ENCODE measurements at regions of chr15 and their contacts with region 1.

Region 1: DNA sequence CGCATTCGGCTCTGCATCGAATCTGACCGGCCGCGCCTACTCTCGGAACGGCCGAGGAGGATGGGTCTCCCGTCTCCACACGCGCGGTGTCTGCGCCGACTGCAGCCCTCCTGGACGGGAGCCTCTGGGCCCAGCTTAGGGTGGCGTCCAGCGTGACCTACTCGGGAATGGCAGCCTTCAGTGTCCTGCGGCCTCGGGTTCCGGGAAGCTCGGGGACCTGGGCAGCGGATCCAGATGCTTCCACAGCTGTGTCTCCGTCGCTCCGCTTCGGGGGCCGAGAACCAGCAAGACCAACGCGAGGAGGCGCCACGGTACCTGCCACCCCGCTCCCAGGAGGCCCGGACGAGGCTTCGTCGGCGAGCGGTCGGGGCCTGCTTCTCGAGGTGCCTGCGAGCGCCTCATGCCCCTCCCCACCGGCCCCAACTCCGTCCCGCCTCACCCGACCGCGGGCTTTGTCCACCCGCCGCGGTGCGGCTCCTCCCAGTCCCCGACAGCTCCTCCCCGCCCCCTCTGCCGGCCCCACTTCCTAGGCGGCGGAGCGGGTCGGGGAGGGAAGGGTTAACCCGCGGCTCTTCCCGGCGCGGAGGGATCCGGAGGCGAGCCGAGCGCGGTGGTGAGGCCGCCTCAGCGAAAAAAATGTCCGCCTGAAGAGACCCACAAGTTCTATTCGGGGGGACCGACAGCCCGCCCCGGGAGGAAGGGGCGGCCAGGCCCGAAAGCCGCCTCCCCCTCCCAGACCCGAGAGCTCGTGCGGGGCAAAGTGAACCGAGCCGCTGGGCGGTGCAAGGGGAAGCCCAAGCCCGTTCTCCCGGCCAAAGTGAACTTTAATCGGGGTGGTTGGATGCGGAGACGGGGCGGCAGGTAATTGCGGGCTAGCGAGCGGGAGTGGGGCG is at the start of gene TCF12:
- DNase-seq: peak; percentile 94
- H3K4me3 ChIP-seq: peak within 1 kb of the TSS; percentile 87 to 98 (median 87)
- H3K27ac ChIP-seq: peak within 1 kb of the TSS; percentile 86
- H3K4me1 ChIP-seq: peaks cover 42% of the 10 kb centered on the region
- H3K27me3 ChIP-seq: no peaks in the 10 kb centered on the region
- CTCF ChIP-seq: peak; percentile 11 to 51
- POLR2A ChIP-seq: peak; percentile 45
- total RNA-seq, gene TCF12: 127 and 133 TPM in 2 replicates

Region 2: DNA sequence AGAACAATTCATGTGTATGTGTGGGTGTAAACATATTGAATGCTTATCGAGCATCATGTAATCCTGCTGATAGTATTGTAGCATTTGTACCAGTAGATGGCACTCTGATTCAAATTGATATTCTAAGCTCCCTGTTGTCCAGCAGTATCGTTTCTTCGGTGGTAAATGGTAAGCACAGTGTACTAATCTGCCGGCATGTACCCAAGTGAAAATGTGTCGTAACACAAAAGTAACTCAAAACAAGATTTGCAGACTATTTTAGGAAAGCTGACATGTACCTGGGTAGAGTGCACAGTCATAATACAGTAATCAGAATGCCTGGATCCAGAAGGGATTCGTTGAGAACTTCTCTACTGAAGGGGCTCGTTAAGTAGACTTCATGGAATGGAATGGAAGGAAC is 421.7 kb before region 1 on chr15:
- CTCF ChIA-PET with region 1: interaction called, 6 read pairs
- POLR2A ChIA-PET with region 1: no interaction called
- dilution Hi-C with region 1: no loop called
- intact Hi-C with region 1: loop called (anchors 5 kb)
- DNase-seq: peak; percentile 78
- H3K4me3 ChIP-seq: no peak overlapping the region
- H3K27ac ChIP-seq: no peak overlapping the region
- H3K4me1 ChIP-seq: no peaks in the 10 kb centered on the region
- H3K27me3 ChIP-seq: peaks cover 7 to 19% of the 10 kb centered on the region in 2 experiments
- CTCF ChIP-seq: peak; percentile 43 to 47
- POLR2A ChIP-seq: no peak

Region 3: GRCh38 chr15:56821721-56822425 is 96.4 kb before region 1 on chr15:
- CTCF ChIA-PET with region 1: interaction called, 13 read pairs
- POLR2A ChIA-PET with region 1: no interaction called
- dilution Hi-C with region 1: no loop called
- intact Hi-C with region 1: loop called (anchors 1 kb)
- DNase-seq: peak; percentile 77
- H3K4me3 ChIP-seq: no peak overlapping the region
- H3K27ac ChIP-seq: no peak overlapping the region
- H3K4me1 ChIP-seq: peaks cover 18% of the 10 kb centered on the region
- H3K27me3 ChIP-seq: peaks cover 0 to 3% of the 10 kb centered on the region in 2 experiments
- CTCF ChIP-seq: peak; percentile 65 to 74
- POLR2A ChIP-seq: no peak

Region 4: GRCh38 chr15:57060799-57061198 is 142.5 kb after region 1 on chr15:
- CTCF ChIA-PET with region 1: no interaction called
- POLR2A ChIA-PET with region 1: no interaction called
- dilution Hi-C with region 1: no loop called
- intact Hi-C with region 1: loop called (anchors 5 kb)
- DNase-seq: peak; percentile 89
- H3K4me3 ChIP-seq: peak overlapping the region in 1 of 3 experiments; percentile 13
- H3K27ac ChIP-seq: peak overlapping the region; percentile 99
- H3K4me1 ChIP-seq: peaks cover 57% of the 10 kb centered on the region
- H3K27me3 ChIP-seq: no peaks in the 10 kb centered on the region
- CTCF ChIP-seq: no peak
- POLR2A ChIP-seq: no peak

Region 5: DNA sequence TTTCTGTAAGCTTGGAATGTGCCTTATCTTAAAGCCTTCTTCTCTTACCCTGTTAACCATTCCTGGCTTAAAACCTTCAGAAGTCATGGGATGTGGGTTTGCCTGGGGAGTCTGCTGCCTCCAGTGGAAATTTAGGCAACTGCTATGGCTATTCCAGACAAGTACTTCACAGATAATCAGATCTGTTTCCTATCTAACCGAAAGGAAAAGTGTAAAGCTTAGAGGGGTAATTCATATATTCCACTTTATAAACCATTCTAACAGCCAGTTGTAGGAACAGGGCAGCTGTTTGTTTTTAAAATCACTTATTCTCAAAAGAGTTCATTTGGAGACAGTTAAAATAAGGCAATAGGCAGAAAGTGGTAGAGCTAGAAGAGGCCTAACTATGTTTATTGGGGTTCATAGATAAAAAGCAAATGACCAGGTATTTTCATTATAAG is 220.1 kb after region 1 on chr15:
- CTCF ChIA-PET with region 1: interaction called, 18 read pairs
- POLR2A ChIA-PET with region 1: no interaction called
- dilution Hi-C with region 1: no loop called
- intact Hi-C with region 1: loop called (anchors 1 kb)
- DNase-seq: peak; percentile 75
- H3K4me3 ChIP-seq: no peak overlapping the region
- H3K27ac ChIP-seq: no peak overlapping the region
- H3K4me1 ChIP-seq: peaks cover 33% of the 10 kb centered on the region
- H3K27me3 ChIP-seq: no peaks in the 10 kb centered on the region
- CTCF ChIP-seq: peak; percentile 61 to 74
- POLR2A ChIP-seq: no peak

Region 6: GRCh38 chr15:57306161-57306943 is 388.1 kb after region 1 on chr15:
- CTCF ChIA-PET with region 1: interaction called, 3 read pairs
- POLR2A ChIA-PET with region 1: no interaction called
- dilution Hi-C with region 1: no loop called
- intact Hi-C with region 1: loop called (anchors 5 kb)
- DNase-seq: peak; percentile 53
- H3K4me3 ChIP-seq: peak overlapping the region; percentile 33 to 39 (median 35)
- H3K27ac ChIP-seq: peak overlapping the region; percentile 32
- H3K4me1 ChIP-seq: peaks cover 11% of the 10 kb centered on the region
- H3K27me3 ChIP-seq: no peaks in the 10 kb centered on the region
- CTCF ChIP-seq: peak; percentile 90 to 91
- POLR2A ChIP-seq: no peak